ENCODE measurements at regions of chr1 and their contacts with region 1.

Region 1: GRCh38 chr1:89454845-89455521 is 69.6 kb upstream of the LRRC8B start:
- DNase-seq: peak; percentile 59
- H3K4me3 ChIP-seq: no peak overlapping the region
- H3K27ac ChIP-seq: no peak overlapping the region
- H3K4me1 ChIP-seq: peaks cover 5% of the 10 kb centered on the region
- CTCF ChIP-seq: peak; percentile 80

Region 2: GRCh38 chr1:88998716-88999115 is 456.3 kb before region 1 on chr1:
- CTCF ChIA-PET with region 1: no interaction called
- POLR2A ChIA-PET with region 1: no interaction called
- intact Hi-C with region 1: loop called (anchors 2 kb)
- DNase-seq: peak; percentile 76
- H3K4me3 ChIP-seq: no peak overlapping the region
- H3K27ac ChIP-seq: no peak overlapping the region
- H3K4me1 ChIP-seq: peaks cover 7% of the 10 kb centered on the region
- CTCF ChIP-seq: peak; percentile 77

Measured in OCI-LY7 (cell line).